ENCODE measurements at regions of chr7 and their contacts with region 1.

Region 1: GRCh38 chr7:129611246-129612111 is at the start of gene NRF1:
- DNase-seq: peak; percentile 84
- ATAC-seq: peak; percentile 72
- H3K4me3 Mint-ChIP-seq: peak within 1 kb of the TSS; percentile 94
- H3K27ac Mint-ChIP-seq: peak within 1 kb of the TSS; percentile 91
- H3K4me1 Mint-ChIP-seq: peaks cover 28% of the 10 kb centered on the region
- H3K27me3 Mint-ChIP-seq: no peaks in the 10 kb centered on the region
- CTCF ChIP-seq: no peak
- total RNA-seq, gene NRF1: 16.4 to 18.3 TPM (median 16.4 TPM) in 3 replicates

Region 2: GRCh38 chr7:129433847-129434674 is 177.4 kb before region 1 on chr7 and contains the start of gene STRIP2:
- CTCF ChIA-PET with region 1: interaction called, 11 read pairs
- POLR2A ChIA-PET with region 1: no interaction called
- DNase-seq: peak; percentile 99
- ATAC-seq: peak; percentile 88
- H3K4me3 Mint-ChIP-seq: peak within 1 kb of the TSS; percentile 86
- H3K27ac Mint-ChIP-seq: peak within 1 kb of the TSS; percentile 94
- H3K4me1 Mint-ChIP-seq: peaks cover 23% of the 10 kb centered on the region
- H3K27me3 Mint-ChIP-seq: peaks cover 31% of the 10 kb centered on the region
- CTCF ChIP-seq: no peak
- total RNA-seq, gene STRIP2: 6.5 to 7.7 TPM (median 7.6 TPM) in 3 replicates

Region 3: GRCh38 chr7:129502376-129502776 is 109.1 kb before region 1 on chr7 and contains the start of gene SMKR1:
- CTCF ChIA-PET with region 1: interaction called, 14 read pairs
- POLR2A ChIA-PET with region 1: interaction called, 3 read pairs
- DNase-seq: peak; percentile 68
- ATAC-seq: peak; percentile 69
- H3K4me3 Mint-ChIP-seq: peak within 1 kb of the TSS; percentile 75
- H3K27ac Mint-ChIP-seq: no peak within 1 kb of the TSS
- H3K4me1 Mint-ChIP-seq: peaks cover 5% of the 10 kb centered on the region
- H3K27me3 Mint-ChIP-seq: peaks cover 48% of the 10 kb centered on the region
- CTCF ChIP-seq: no peak
- total RNA-seq, gene SMKR1: 0.23 to 0.50 TPM (median 0.34 TPM) in 3 replicates

Region 4: DNA sequence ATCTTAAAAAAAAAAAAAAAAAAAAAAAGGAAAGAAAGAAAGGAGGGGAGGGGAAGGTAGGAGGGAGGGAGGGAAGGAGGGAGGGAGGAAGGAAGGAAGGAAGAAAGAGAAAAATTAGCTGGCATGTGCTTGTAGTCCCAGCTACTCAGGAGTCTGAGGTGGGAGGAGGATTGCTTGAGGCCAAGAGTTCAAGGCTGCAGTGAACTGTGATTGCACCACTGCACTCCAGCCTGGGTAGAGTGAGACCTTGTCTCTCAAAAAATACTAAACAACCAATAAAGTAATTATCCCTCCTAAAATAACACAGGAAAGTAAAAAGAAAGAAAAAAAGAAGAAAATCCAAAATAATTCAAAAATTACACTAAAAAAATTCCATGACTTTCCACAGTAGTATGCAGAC is 13.8 kb before region 1 on chr7:
- CTCF ChIA-PET with region 1: interaction called, 21 read pairs
- POLR2A ChIA-PET with region 1: no interaction called
- DNase-seq: no peak
- ATAC-seq: no peak
- H3K4me3 Mint-ChIP-seq: no peak overlapping the region
- H3K27ac Mint-ChIP-seq: no peak overlapping the region
- H3K4me1 Mint-ChIP-seq: no peaks in the 10 kb centered on the region
- H3K27me3 Mint-ChIP-seq: no peaks in the 10 kb centered on the region
- CTCF ChIP-seq: no peak

Region 5: DNA sequence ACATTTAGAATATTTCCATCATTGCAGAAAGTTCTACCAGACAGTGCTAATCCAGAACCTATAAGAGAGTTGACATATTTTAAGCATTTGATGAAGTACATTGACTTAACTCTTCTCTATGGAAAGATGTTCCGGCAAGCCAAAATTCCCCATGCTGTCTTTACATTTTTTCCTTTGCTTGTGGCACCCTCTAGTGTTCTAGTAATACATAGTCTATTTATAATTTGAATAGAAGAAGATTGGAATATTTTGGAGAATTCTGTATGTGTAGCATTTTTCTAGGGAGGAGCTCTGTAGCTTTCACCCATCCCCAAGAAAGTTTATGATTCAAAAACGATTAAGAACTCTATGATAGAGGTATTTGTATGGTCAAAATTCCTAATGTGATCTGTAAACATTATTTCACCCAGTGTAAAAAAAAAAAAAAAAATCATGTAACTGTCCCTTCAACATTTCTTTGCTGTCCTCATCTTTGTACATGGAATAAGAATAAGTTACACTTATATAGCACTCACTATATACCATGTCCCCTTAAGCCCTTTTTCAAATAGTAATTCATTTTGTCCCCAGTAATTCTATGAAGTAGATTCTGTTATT is 33.3 kb after region 1 on chr7:
- CTCF ChIA-PET with region 1: interaction called, 18 read pairs
- POLR2A ChIA-PET with region 1: interaction called, 3 read pairs
- DNase-seq: no peak
- ATAC-seq: no peak
- H3K4me3 Mint-ChIP-seq: no peak overlapping the region
- H3K27ac Mint-ChIP-seq: no peak overlapping the region
- H3K4me1 Mint-ChIP-seq: peaks cover 44% of the 10 kb centered on the region
- H3K27me3 Mint-ChIP-seq: no peaks in the 10 kb centered on the region
- CTCF ChIP-seq: peak; percentile 24; the same call in 1 of the 2 replicates

Region 6: DNA sequence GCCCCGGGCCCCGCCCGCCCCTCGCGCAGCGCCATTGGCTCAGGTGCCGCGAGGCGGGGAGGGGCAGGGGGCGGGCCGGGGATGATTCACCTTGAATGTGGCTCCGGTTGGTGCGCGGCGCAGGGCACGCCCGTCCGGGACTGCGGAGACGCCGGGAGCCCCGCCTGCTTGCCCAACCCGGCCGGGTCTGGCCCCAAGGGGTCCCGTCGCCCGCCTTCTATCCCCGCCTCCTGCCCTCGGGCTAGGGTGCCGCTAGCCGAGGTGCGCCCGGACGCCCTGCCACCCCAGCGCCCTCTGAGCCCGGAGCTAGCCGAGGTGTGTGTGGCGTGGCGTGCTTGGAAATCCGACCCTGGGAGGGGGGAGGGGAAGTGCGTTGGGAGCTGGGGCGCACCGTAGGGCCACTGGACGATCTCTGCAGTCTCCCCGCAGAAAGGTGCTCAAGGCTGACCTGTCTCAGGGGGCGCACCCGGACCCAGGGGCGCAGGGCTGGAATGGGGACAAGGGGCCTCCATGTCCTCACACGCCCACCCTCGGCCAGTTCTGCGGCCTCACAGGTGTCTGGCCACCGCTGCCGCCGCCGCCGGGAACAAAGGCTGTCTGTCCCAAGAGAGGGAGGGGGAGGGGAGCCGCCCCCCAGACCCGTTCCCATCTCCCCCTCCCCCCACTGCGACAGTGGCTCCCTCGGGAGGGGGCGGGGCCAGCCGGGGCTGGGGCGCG is 168.9 kb after region 1 on chr7:
- CTCF ChIA-PET with region 1: interaction called, 12 read pairs
- POLR2A ChIA-PET with region 1: no interaction called
- DNase-seq: peak; percentile 97
- ATAC-seq: peak; percentile 55
- H3K4me3 Mint-ChIP-seq: peak overlapping the region; percentile 82
- H3K27ac Mint-ChIP-seq: no peak overlapping the region
- H3K4me1 Mint-ChIP-seq: peaks cover 51% of the 10 kb centered on the region
- H3K27me3 Mint-ChIP-seq: peaks cover 75% of the 10 kb centered on the region
- CTCF ChIP-seq: no peak

Measured in WTC11 (cell line).